ENCODE measurements at regions of chr9 and their contacts with region 1.

Region 1: GRCh38 chr9:133726401-133727276 is 11.5 kb downstream of the SARDH start:
- DNase-seq: peak; percentile 27 to 71 (median 40)
- H3K4me3 ChIP-seq: no peak overlapping the region
- H3K4me3 Mint-ChIP-seq: no peak overlapping the region
- H3K27ac ChIP-seq: no peak overlapping the region
- H3K27ac Mint-ChIP-seq: peak overlapping the region in 2 of 8 donors; percentile 13 to 85
- H3K4me1 ChIP-seq: peaks cover 9% of the 10 kb centered on the region
- H3K4me1 Mint-ChIP-seq: peaks cover 7 to 9% (median 9%) of the 10 kb centered on the region in 3 donors
- H3K27me3 ChIP-seq: no peaks in the 10 kb centered on the region
- H3K27me3 Mint-ChIP-seq: peaks cover 8 to 15% of the 10 kb centered on the region in 2 donors

Region 2: GRCh38 chr9:133459476-133460404 is 266.9 kb before region 1 on chr9 and contains the start of gene CACFD1:
- CTCF ChIA-PET with region 1: no interaction called
- POLR2A ChIA-PET with region 1: no interaction called
- DNase-seq: peak; percentile 89 to 93 (median 93)
- H3K4me3 ChIP-seq: peak within 1 kb of the TSS; percentile 80
- H3K4me3 Mint-ChIP-seq: peak within 1 kb of the TSS; percentile 87 to 95 (median 92)
- H3K27ac ChIP-seq: peak within 1 kb of the TSS; percentile 79
- H3K27ac Mint-ChIP-seq: peak within 1 kb of the TSS; percentile 93 to 98 (median 94)
- H3K4me1 ChIP-seq: peaks cover 13% of the 10 kb centered on the region
- H3K4me1 Mint-ChIP-seq: peaks cover 0 to 26% (median 5%) of the 10 kb centered on the region in 3 donors
- H3K27me3 ChIP-seq: no peaks in the 10 kb centered on the region
- H3K27me3 Mint-ChIP-seq: peaks cover 0 to 2% of the 10 kb centered on the region in 2 donors
- total RNA-seq, gene CACFD1: 1.3 to 2.5 TPM

Region 3: GRCh38 chr9:133604214-133604613 is 122.4 kb before region 1 on chr9:
- CTCF ChIA-PET with region 1: interaction called, 11 read pairs
- POLR2A ChIA-PET with region 1: no interaction called
- DNase-seq: peak in 3 of 5 donors; percentile 29 to 64 (median 42)
- H3K4me3 ChIP-seq: no peak overlapping the region
- H3K4me3 Mint-ChIP-seq: no peak overlapping the region
- H3K27ac ChIP-seq: no peak overlapping the region
- H3K27ac Mint-ChIP-seq: peak overlapping the region in 4 of 8 donors; percentile 36 to 73 (median 63)
- H3K4me1 ChIP-seq: peaks cover 5% of the 10 kb centered on the region
- H3K4me1 Mint-ChIP-seq: peaks cover 9 to 23% (median 9%) of the 10 kb centered on the region in 3 donors
- H3K27me3 ChIP-seq: peaks cover 13% of the 10 kb centered on the region
- H3K27me3 Mint-ChIP-seq: peaks cover 24 to 38% of the 10 kb centered on the region in 2 donors

Region 4: DNA sequence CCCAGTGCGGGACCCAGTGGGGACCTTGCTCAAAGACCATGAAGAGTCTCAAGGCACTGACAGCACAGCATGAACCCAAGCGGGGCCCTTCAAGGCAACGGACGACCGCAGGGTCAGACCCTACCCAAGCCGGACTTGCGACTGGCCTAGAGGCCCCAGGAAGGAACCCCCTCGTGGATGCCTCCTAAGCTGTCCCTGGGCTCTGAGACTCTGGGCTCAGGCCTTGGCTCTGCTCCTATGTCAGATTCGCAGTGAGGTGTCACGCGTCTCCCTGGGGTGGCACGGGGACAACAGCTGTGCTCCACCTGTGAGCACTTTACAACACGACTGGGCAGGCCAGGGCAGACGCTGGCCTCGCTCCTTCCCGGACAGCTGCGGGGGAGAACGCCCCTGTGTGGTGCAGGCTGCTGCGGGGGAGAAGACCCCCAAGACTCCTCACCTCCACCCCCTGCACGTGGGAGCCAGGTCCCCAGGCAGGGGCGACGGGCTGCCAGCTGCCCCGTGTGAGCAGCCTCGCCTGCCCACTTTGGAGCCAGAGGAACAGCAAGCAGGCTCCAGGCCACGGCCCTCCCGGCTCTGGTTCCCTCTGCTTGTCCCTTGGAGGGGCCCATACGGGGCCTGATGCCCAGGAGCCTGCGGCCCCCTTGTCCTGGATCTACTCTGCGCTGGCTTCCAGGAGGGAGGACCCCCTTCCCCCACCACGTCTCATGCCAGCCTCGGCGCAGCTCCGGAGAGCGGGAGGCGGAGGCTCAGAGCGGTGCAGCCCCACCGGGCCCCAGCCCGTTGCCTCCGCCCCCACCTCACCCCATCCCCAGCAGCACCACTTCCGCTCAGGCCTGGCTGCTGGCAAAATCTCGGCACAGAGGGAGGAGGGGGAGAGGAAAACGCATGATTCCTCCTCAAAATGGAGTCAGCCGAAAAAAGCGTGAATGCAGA is 24.5 kb before region 1 on chr9:
- CTCF ChIA-PET with region 1: interaction called, 10 read pairs
- POLR2A ChIA-PET with region 1: no interaction called
- DNase-seq: peak in 4 of 5 donors; percentile 13 to 79 (median 62)
- H3K4me3 ChIP-seq: peak overlapping the region; percentile 64
- H3K4me3 Mint-ChIP-seq: peak overlapping the region; percentile 71 to 86 (median 80)
- H3K27ac ChIP-seq: no peak overlapping the region
- H3K27ac Mint-ChIP-seq: peak overlapping the region; percentile 84 to 97 (median 91)
- H3K4me1 ChIP-seq: peaks cover 54% of the 10 kb centered on the region
- H3K4me1 Mint-ChIP-seq: peaks cover 25 to 48% (median 37%) of the 10 kb centered on the region in 3 donors
- H3K27me3 ChIP-seq: no peaks in the 10 kb centered on the region
- H3K27me3 Mint-ChIP-seq: no peaks in the 10 kb centered on the region